ENCODE measurements at regions of chr4 and their contacts with region 1.

Region 1: GRCh38 chr4:73308286-73308685 is 49.7 kb upstream of the ANKRD17 start:
- DNase-seq: peak; percentile 10
- H3K4me3 Mint-ChIP-seq: no peak overlapping the region
- H3K27ac Mint-ChIP-seq: no peak overlapping the region
- H3K4me1 Mint-ChIP-seq: peaks cover 11% of the 10 kb centered on the region
- H3K27me3 Mint-ChIP-seq: no peaks in the 10 kb centered on the region
- CTCF ChIP-seq: peak; percentile 22

Region 2: GRCh38 chr4:73329300-73329699 is 21.0 kb after region 1 on chr4:
- CTCF ChIA-PET with region 1: interaction called, 12 read pairs
- POLR2A ChIA-PET with region 1: no interaction called
- intact Hi-C with region 1: no loop called
- DNase-seq: no peak
- H3K4me3 Mint-ChIP-seq: no peak overlapping the region
- H3K27ac Mint-ChIP-seq: no peak overlapping the region
- H3K4me1 Mint-ChIP-seq: peaks cover 8% of the 10 kb centered on the region
- H3K27me3 Mint-ChIP-seq: no peaks in the 10 kb centered on the region
- CTCF ChIP-seq: no peak

Region 3: GRCh38 chr4:73573794-73574406 is 265.6 kb after region 1 on chr4:
- CTCF ChIA-PET with region 1: no interaction called
- POLR2A ChIA-PET with region 1: no interaction called
- intact Hi-C with region 1: loop called (anchors 10 kb)
- DNase-seq: peak; percentile 83
- H3K4me3 Mint-ChIP-seq: no peak overlapping the region
- H3K27ac Mint-ChIP-seq: no peak overlapping the region
- H3K4me1 Mint-ChIP-seq: no peaks in the 10 kb centered on the region
- H3K27me3 Mint-ChIP-seq: no peaks in the 10 kb centered on the region
- CTCF ChIP-seq: peak; percentile 83

Measured in MCF 10A (cell line).